ENCODE measurements at regions of chr14 and their contacts with region 1.

Region 1: DNA sequence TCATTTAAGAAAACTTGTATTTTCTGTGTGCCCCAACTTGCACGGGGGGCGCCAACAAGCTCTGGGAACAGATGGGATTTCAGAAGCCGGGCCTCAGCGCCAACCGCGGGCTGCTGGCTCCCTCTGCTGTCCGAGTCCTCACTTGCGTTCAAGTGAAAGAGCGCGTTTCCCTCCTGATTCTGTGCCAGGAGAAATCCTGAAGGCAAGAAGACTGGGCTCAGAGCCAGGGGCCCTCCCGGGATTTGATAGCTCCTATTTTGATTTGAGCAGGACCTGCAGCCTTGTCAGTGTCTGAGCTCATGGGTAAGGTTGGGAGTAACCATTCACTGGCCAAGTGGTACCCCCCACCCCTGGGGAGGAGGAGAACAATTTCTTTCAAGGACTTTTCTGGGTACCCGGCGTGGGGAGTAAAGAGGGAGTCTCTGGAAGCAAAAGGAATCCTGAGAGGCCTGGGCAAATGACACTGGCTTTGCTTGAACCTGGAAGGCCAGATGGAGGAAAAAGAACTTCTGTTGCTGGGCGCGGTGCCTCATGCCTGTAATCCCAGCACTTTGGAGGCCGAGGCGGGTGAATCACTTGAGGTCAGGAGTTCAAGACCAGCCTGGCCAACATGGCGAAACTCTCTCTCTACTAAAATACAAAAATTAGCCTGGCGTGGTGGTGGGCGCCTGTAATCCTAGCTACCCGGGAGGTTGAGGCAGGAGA is 179.0 kb upstream of the RGS6 start:
- DNase-seq: peak; percentile 62 to 82
- ATAC-seq: peak; percentile 88 to 95
- H3K4me3 ChIP-seq: no peak overlapping the region
- H3K27ac ChIP-seq: 0 out of 6 replicates have a peak overlapping the region, but pooled peaks of 1 of the 2 experiments have one; percentile 8
- H3K4me1 ChIP-seq: 0 out of 3 replicates have a peak, but pooled peaks cover 4% of the 10 kb centered on the region
- CTCF ChIP-seq: peak; percentile 95
- EP300 ChIP-seq: no peak
- POLR2A ChIP-seq: no peak
- RAD21 ChIP-seq: peak; percentile 98 to 99

Region 2: DNA sequence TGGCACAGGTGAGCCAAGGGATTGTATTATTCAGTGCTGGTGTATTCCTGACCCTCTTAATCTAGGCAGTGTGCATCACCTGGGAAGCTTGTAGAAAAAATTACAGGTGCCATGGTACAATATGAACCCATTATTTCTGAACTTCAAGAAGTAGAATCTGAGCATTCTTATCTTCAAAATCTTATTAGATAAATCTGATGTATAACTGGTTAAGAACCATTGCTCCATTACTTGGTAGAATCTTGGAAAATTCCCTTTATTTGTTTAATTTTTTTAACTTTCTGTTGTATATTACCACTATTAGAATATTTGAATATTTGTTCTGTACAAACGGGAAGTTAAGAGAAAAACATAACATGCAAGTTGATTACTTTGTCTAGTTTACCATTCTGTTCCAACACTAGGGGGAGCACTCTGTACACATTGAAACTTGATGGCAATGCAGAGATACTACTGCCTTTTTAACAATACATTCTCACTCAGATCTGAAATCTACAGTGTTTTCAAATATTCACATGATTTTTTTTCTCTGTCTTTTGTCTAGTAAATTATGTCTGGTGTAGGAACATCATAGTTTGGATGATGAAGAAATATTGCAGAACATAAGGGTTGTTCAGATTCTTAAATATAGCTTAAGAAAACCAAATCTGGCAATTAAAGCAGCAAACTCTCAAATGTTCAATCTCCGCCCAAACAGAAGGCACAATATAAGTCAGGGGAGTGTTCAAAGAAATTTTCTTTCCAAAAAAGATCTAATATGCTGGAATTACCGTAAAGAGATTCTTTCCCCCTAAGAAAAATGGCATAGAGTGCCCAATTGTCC is 649.4 kb before region 1 on chr14:
- CTCF ChIA-PET with region 1: interaction called, 14 read pairs
- POLR2A ChIA-PET with region 1: no interaction called
- DNase-seq: peak; percentile 48 to 62
- ATAC-seq: peak; percentile 76 to 82; a peak in 4 of 6 replicates
- H3K4me3 ChIP-seq: no peak overlapping the region
- H3K27ac ChIP-seq: no peak overlapping the region
- H3K4me1 ChIP-seq: 0 out of 3 replicates have a peak, but pooled peaks cover 2% of the 10 kb centered on the region
- CTCF ChIP-seq: peak; percentile 87
- EP300 ChIP-seq: no peak
- POLR2A ChIP-seq: no peak
- RAD21 ChIP-seq: peak; percentile 49 to 55; a peak in 4 of 5 replicates

Region 3: DNA sequence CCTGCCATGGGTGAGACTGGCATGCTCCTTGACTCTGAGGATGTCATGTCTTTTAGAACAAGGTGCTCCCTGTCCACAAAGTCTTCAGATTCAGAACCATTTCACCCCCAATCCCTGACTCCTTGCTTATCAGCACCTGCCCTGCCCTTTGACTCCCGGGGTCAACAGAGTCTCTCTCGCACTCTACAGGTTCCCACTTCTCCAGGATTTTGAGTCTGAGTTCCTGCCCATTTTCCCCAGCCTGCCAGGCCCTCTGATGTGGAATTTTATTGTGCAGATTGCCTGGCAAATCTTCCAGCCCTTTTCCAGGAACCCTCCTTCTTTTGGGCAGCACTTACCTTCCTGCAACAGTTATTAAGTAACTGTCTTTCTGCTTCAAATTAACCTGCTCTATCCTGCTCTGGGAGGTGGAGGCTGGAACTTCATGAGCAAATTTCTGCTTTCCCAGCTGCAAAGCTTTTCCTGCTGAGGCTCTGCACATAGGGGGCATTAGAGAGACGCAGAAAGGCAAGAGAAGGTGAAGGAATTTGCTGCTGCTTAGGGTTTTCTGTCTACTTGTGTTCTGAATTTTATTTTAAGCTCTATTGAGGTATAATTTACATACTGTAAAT is 587.0 kb before region 1 on chr14:
- CTCF ChIA-PET with region 1: interaction called, 11 read pairs
- POLR2A ChIA-PET with region 1: no interaction called
- DNase-seq: peak; percentile 30 to 55
- ATAC-seq: peak; percentile 69 to 74
- H3K4me3 ChIP-seq: no peak overlapping the region
- H3K27ac ChIP-seq: no peak overlapping the region
- H3K4me1 ChIP-seq: 0 out of 3 replicates have a peak, but pooled peaks cover 7% of the 10 kb centered on the region
- CTCF ChIP-seq: peak; percentile 30; the same call in 2 of the 3 replicates
- EP300 ChIP-seq: no peak
- POLR2A ChIP-seq: no peak
- RAD21 ChIP-seq: peak; percentile 43 to 59; a peak in 4 of 5 replicates

Region 4: DNA sequence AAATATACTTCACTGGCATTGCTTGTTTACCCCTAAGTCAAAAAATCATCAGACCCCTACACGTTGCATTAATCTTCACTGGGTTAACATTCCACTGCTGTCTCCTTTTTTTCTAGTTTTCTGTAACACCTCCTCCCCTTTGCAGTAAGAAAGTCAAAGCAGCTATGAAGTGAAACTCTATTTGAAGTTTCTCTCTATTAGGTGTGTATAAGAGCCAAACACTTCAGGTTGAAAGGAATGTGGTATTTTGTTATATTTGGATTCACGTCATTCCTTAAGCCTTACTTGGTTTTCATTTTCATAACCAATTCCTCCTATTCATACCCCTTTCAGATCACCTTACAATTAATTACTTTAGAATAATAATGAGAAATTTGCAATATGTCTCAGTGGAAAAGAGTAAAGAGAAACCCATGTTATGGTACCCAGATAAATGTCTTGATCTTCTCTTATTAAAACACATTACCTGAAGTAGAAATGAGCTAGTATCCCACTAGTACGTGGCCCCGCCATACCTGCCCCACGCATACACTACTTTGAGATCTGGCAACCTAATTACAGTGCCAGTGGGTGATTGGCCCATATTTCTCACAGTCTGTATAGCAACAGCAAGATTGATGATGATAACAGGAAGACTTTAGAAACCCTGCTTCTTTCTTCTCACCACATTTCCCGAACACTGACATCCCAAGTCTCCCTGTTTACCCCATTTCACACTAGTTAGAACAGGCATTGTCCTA is 57.5 kb before region 1 on chr14:
- CTCF ChIA-PET with region 1: no interaction called
- POLR2A ChIA-PET with region 1: no interaction called
- DNase-seq: no peak
- ATAC-seq: no peak
- H3K4me3 ChIP-seq: no peak overlapping the region
- H3K27ac ChIP-seq: no peak overlapping the region
- H3K4me1 ChIP-seq: no peaks in the 10 kb centered on the region
- CTCF ChIP-seq: no peak
- EP300 ChIP-seq: no peak
- POLR2A ChIP-seq: no peak
- RAD21 ChIP-seq: no peak

Region 5: DNA sequence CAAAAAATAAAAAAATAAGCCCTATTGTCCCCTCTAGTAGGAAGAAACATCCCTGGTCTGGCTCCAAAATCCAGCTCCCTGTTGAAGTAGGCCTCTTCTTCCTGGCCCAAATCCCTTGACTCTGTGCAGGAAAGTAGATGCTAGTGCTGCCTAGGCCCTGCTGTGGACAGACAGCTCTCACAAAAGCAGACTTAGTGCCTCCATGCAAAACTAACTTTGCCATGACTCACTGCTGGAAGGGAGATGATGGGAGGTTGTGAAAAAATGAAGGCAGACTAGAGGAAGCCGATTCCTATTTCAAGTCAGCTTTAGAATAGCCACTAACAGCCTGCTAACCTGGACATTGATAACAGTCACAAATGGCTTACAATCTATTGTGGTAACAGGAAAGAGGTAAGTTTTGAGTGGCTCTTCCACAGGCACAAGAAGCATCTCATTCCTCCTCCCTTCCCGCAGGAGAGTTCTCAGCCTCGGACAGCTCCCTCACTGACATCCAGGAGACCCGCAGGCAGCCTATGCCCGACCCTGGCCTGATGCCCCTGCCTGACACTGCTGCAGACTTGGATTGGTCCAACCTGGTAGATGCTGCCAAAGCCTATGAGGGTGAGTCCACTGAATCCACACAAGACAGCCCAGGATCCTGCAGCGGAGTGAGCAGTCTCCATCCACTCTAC is 19.9 kb before region 1 on chr14:
- CTCF ChIA-PET with region 1: interaction called, 45 read pairs
- POLR2A ChIA-PET with region 1: no interaction called
- DNase-seq: no peak
- ATAC-seq: no peak
- H3K4me3 ChIP-seq: no peak overlapping the region
- H3K27ac ChIP-seq: no peak overlapping the region
- H3K4me1 ChIP-seq: no peaks in the 10 kb centered on the region
- CTCF ChIP-seq: no peak
- EP300 ChIP-seq: no peak
- POLR2A ChIP-seq: no peak
- RAD21 ChIP-seq: no peak

Region 6: DNA sequence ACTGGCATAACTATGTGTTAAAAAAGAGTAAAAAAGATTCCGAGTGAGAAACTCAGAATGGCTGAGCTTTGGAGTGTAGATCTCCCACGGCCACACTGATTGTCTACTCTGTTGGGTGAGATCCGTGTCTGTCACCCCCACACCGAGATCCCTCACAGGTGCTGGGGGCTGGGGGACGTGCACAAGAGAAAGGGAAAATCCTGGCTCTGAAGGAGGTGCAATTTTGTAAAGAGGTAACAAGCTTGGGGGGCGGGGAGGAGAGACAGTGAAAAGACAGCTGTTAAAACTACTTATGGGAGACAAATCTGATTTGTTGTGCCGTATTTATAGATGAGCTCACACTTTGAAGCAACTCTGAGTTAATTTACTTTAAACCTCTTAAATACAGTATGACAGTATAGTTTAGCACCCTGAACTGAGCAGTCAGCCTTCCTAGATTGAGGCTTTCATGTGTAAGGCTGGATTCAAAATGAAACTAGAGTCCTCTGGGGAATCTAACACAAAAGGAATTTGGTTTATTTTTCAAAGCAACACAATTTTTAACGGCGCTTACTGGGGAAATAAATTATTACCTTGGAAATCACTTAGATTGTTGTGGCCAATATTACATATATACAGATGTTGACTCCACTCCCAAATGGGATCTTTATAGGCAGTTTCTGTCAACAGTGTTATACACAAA is 11.6 kb after region 1 on chr14:
- CTCF ChIA-PET with region 1: interaction called, 17 read pairs
- POLR2A ChIA-PET with region 1: no interaction called
- DNase-seq: no peak
- ATAC-seq: no peak
- H3K4me3 ChIP-seq: no peak overlapping the region
- H3K27ac ChIP-seq: no peak overlapping the region
- H3K4me1 ChIP-seq: no peaks in the 10 kb centered on the region
- CTCF ChIP-seq: no peak
- EP300 ChIP-seq: no peak
- POLR2A ChIP-seq: no peak
- RAD21 ChIP-seq: no peak

Region 7: GRCh38 chr14:71855399-71856036 is 102.2 kb after region 1 on chr14:
- CTCF ChIA-PET with region 1: interaction called, 19 read pairs
- POLR2A ChIA-PET with region 1: no interaction called
- DNase-seq: peak; percentile 46 to 64
- ATAC-seq: peak; percentile 68 to 88; a peak in 5 of 6 replicates
- H3K4me3 ChIP-seq: no peak overlapping the region
- H3K27ac ChIP-seq: no peak overlapping the region
- H3K4me1 ChIP-seq: 0 out of 3 replicates have a peak, but pooled peaks cover 4% of the 10 kb centered on the region
- CTCF ChIP-seq: peak; percentile 57
- EP300 ChIP-seq: no peak
- POLR2A ChIP-seq: no peak
- RAD21 ChIP-seq: peak; percentile 71 to 79

Region 8: GRCh38 chr14:72053651-72054050 is 300.4 kb after region 1 on chr14:
- CTCF ChIA-PET with region 1: no interaction called
- POLR2A ChIA-PET with region 1: no interaction called
- DNase-seq: no peak
- ATAC-seq: no peak
- H3K4me3 ChIP-seq: no peak overlapping the region
- H3K27ac ChIP-seq: no peak overlapping the region
- H3K4me1 ChIP-seq: no peaks in the 10 kb centered on the region
- CTCF ChIP-seq: no peak
- EP300 ChIP-seq: no peak
- POLR2A ChIP-seq: no peak
- RAD21 ChIP-seq: no peak